ENCODE measurements at regions of chr17 and their contacts with region 1.

Region 1: GRCh38 chr17:45087504-45087975 is 26.4 kb downstream of the NMT1 start:
- H3K4me3 ChIP-seq: no peak overlapping the region
- H3K27ac ChIP-seq: no peak overlapping the region
- H3K4me1 ChIP-seq: no peaks in the 10 kb centered on the region
- CTCF ChIP-seq: no peak

Region 2: GRCh38 chr17:45098869-45099616 is 11.5 kb after region 1 on chr17:
- CTCF ChIA-PET with region 1: interaction called, 71 read pairs
- POLR2A ChIA-PET with region 1: no interaction called
- H3K4me3 ChIP-seq: no peak overlapping the region
- H3K27ac ChIP-seq: no peak overlapping the region
- H3K4me1 ChIP-seq: no peaks in the 10 kb centered on the region
- CTCF ChIP-seq: peak; percentile 88

Region 3: GRCh38 chr17:45121055-45121454 is 33.5 kb after region 1 on chr17:
- CTCF ChIA-PET with region 1: no interaction called
- POLR2A ChIA-PET with region 1: no interaction called
- H3K4me3 ChIP-seq: no peak overlapping the region
- H3K27ac ChIP-seq: no peak overlapping the region
- H3K4me1 ChIP-seq: peaks cover 5% of the 10 kb centered on the region; the same call in 1 of the 2 replicates
- CTCF ChIP-seq: no peak